Psoas muscle (tissue), 8 donors: ENCODE measurements at regions of chr5 and their contacts with region 1.

Region 1: GRCh38 chr5:154729613-154730012 is 25.6 kb upstream of the LARP1 start:
- DNase-seq: no peak
- ATAC-seq: no peak
- H3K4me3 ChIP-seq: no peak overlapping the region
- H3K27ac ChIP-seq: no peak overlapping the region
- H3K4me1 ChIP-seq: peaks cover 5% of the 10 kb centered on the region
- H3K27me3 ChIP-seq: no peaks in the 10 kb centered on the region
- CTCF ChIP-seq: no peak

Region 2: DNA sequence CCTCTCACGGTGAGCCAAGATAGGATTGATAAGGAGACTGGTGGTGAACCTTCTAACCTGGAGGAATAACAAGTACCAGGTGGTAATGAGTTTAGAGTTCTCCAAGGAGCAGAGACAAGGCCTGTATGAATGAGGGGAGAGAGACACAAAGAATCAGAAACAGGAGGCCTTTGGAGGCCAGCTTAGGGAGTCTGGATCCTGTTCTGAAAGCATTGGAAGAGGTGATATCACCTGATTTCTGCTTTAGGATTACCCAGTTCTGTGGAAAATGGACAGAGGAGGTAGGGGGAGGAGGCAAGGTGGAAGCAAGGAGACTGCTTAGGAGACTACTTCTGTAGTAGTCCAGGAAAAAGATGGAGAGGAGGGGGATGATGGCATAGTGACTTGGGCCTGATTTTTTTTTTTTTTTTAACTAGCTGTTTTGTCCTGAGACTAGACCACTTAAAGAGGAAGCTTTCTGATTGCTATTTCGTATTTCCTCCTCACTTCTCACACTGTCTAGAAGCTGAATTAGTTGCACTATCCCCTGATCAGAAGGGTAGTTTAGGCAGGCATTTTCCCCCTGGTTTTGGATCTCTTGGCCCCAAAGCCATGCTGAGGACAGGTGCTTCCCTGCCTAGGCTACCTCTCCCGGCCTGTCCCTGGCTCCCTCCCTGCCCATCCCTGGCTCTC is 40.4 kb after region 1 on chr5:
- intact Hi-C with region 1: loop called in 1 of 2 experiments (anchors 2 kb)
- DNase-seq: no peak
- ATAC-seq: no peak
- H3K4me3 ChIP-seq: no peak overlapping the region
- H3K27ac ChIP-seq: peak overlapping the region; percentile 73
- H3K4me1 ChIP-seq: peaks cover 94% of the 10 kb centered on the region
- H3K27me3 ChIP-seq: no peaks in the 10 kb centered on the region
- CTCF ChIP-seq: no peak